ENCODE measurements at regions of chr4 and their contacts with region 1.

Region 1: GRCh38 chr4:32135642-32136041 is 1415.5 kb downstream of the PCDH7 start:
- DNase-seq: no peak
- H3K4me3 ChIP-seq: no peak overlapping the region
- CTCF ChIP-seq: no peak
- POLR2A ChIP-seq: no peak

Region 2: GRCh38 chr4:32087211-32087610 is 48.4 kb before region 1 on chr4:
- intact Hi-C with region 1: loop called (anchors 5 kb)
- DNase-seq: no peak
- H3K4me3 ChIP-seq: no peak overlapping the region
- CTCF ChIP-seq: no peak
- POLR2A ChIP-seq: no peak